GM12878 (cell line): ENCODE measurements at regions of chr3 and their contacts with region 1.

Region 1: GRCh38 chr3:23761440-23761896 is 44.3 kb upstream of the UBE2E1 start:
- DNase-seq: peak; percentile 56
- ATAC-seq: peak; percentile 68
- H3K4me3 ChIP-seq: peak overlapping the region; percentile 50; the same call in 1 of the 2 replicates
- H3K27ac ChIP-seq: peak overlapping the region; percentile 39
- H3K4me1 ChIP-seq: peaks cover 37% of the 10 kb centered on the region
- H3K27me3 ChIP-seq: no peaks in the 10 kb centered on the region
- CTCF ChIP-seq: peak; percentile 49 to 59 (median 54)
- EP300 ChIP-seq: no peak; a peak in 1 of 4 replicates
- POLR2A ChIP-seq: no peak
- RAD21 ChIP-seq: peak; percentile 72

Region 2: GRCh38 chr3:23202921-23203707 is 558.4 kb before region 1 on chr3 and contains the start of gene UBE2E2:
- CTCF ChIA-PET with region 1: interaction called, 3 read pairs
- POLR2A ChIA-PET with region 1: no interaction called
- RAD21 ChIA-PET with region 1: interaction called, 3 read pairs
- SMC1A ChIA-PET with region 1: interaction called, 12 read pairs
- in situ Hi-C with region 1: no loop called
- intact Hi-C with region 1: loop called (anchors 5 kb)
- DNase-seq: no peak
- ATAC-seq: peak; percentile 77
- H3K4me3 ChIP-seq: peak within 1 kb of the TSS; percentile 92
- H3K27ac ChIP-seq: peak within 1 kb of the TSS; percentile 59
- H3K4me1 ChIP-seq: no peaks in the 10 kb centered on the region
- H3K27me3 ChIP-seq: no peaks in the 10 kb centered on the region
- CTCF ChIP-seq: no peak
- EP300 ChIP-seq: peak in 1 of 2 experiments; percentile 22; a peak in 1 of 4 replicates
- POLR2A ChIP-seq: peak; percentile 75
- RAD21 ChIP-seq: peak; percentile 22; the same call in 1 of the 2 replicates
- polyA plus RNA-seq, gene UBE2E2: 8.7 to 15.0 TPM

Region 3: DNA sequence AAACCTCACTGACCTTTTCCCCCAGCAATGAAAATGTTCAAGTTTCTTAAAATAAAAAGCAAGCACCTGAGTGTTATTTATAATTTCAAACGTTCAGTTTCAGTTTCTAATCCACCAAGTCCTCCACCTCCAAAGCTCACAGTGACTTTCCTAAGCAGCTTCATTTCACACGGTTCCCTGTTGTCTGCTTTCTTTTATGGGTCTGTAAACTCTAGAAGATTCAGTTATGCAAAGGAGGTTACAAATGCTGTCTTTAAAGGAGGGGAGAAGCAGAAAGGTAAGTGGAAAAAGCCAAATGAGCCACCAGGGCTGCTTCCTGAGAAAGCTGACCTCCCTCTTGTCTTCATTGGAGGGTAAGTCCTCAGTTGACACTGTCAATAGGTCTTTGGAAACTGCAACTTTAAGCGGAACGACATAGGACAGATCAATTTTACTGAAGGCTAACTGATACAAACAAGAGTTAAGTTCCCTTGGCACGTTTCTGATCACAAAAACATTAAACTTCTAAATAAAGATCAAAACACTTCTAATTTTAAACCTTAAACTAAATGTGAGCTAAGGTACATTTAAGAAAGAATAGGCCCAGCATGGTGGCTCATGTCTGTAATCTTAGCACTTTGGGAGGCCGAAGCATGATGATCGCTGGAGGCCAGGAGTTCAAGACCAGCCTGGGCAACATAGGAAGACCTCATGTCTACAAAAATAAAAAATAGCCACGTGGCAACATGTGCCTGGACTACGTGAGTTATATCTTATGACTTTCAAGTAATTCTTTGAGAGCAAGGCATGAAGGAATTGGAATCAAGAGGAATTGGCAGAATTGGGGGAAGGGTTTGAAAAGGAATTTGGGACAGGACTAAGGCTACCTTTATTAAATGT is 107.6 kb before region 1 on chr3:
- CTCF ChIA-PET with region 1: interaction called, 5 read pairs
- POLR2A ChIA-PET with region 1: interaction called, 5 read pairs
- RAD21 ChIA-PET with region 1: interaction called, 23 read pairs
- SMC1A ChIA-PET with region 1: interaction called, 35 read pairs
- in situ Hi-C with region 1: no loop called
- intact Hi-C with region 1: loop called (anchors 2 kb)
- DNase-seq: peak; percentile 97
- ATAC-seq: peak; percentile 88
- H3K4me3 ChIP-seq: peak overlapping the region; percentile 26; the same call in 1 of the 2 replicates
- H3K27ac ChIP-seq: peak overlapping the region; percentile 88
- H3K4me1 ChIP-seq: peaks cover 48% of the 10 kb centered on the region
- H3K27me3 ChIP-seq: no peaks in the 10 kb centered on the region
- CTCF ChIP-seq: no peak
- EP300 ChIP-seq: peak; percentile 29 to 92; a peak in 3 of 4 replicates
- POLR2A ChIP-seq: no peak
- RAD21 ChIP-seq: peak; percentile 24; the same call in 1 of the 2 replicates

Region 4: DNA sequence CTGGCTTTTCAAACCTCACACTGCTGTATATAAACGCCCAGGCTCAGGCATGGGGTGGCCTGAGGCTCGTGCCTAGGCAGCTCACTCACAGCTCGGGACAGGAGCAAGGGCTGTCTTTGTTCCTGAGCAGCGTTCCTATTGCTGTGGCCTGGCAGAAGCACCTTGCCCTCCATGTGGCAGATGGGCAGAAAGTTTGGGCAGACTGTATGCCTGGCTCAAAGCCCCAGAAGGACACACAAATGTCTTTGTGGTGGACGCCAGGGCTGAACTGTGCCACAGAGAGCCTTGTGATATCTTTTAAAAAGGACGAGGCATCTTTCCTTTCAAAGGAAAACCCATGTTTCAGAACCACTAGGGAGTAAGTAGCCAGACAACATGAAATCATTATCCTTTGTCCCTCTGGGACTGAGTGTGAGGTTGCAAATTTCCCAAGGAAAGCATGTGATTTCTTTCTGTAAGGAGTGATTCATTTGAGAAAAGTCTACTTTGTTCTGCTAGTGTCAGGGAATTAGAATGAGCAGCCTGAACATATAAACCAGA is 15.0 kb after region 1 on chr3:
- CTCF ChIA-PET with region 1: interaction called, 6 read pairs
- POLR2A ChIA-PET with region 1: interaction called, 4 read pairs
- RAD21 ChIA-PET with region 1: no interaction called
- SMC1A ChIA-PET with region 1: interaction called, 10 read pairs
- in situ Hi-C with region 1: no loop called
- intact Hi-C with region 1: no loop called
- DNase-seq: no peak
- ATAC-seq: no peak
- H3K4me3 ChIP-seq: no peak overlapping the region
- H3K27ac ChIP-seq: no peak overlapping the region
- H3K4me1 ChIP-seq: peaks cover 10% of the 10 kb centered on the region; the same call in 1 of the 2 replicates
- H3K27me3 ChIP-seq: no peaks in the 10 kb centered on the region; a peak in 1 of 4 replicates
- CTCF ChIP-seq: no peak
- EP300 ChIP-seq: no peak
- POLR2A ChIP-seq: no peak
- RAD21 ChIP-seq: no peak

Region 5: GRCh38 chr3:23859016-23859743 is 97.7 kb after region 1 on chr3:
- CTCF ChIA-PET with region 1: interaction called, 4 read pairs
- POLR2A ChIA-PET with region 1: no interaction called
- RAD21 ChIA-PET with region 1: interaction called, 10 read pairs
- SMC1A ChIA-PET with region 1: interaction called, 12 read pairs
- in situ Hi-C with region 1: no loop called
- intact Hi-C with region 1: no loop called
- DNase-seq: no peak
- ATAC-seq: no peak
- H3K4me3 ChIP-seq: no peak overlapping the region
- H3K27ac ChIP-seq: no peak overlapping the region
- H3K4me1 ChIP-seq: peaks cover 30% of the 10 kb centered on the region
- H3K27me3 ChIP-seq: no peaks in the 10 kb centered on the region
- CTCF ChIP-seq: no peak
- EP300 ChIP-seq: no peak
- POLR2A ChIP-seq: no peak
- RAD21 ChIP-seq: no peak

Region 6: GRCh38 chr3:23900744-23901143 is 139.3 kb after region 1 on chr3:
- CTCF ChIA-PET with region 1: no interaction called
- POLR2A ChIA-PET with region 1: no interaction called
- RAD21 ChIA-PET with region 1: no interaction called
- SMC1A ChIA-PET with region 1: no interaction called
- in situ Hi-C with region 1: no loop called
- intact Hi-C with region 1: no loop called
- DNase-seq: no peak
- ATAC-seq: no peak
- H3K4me3 ChIP-seq: no peak overlapping the region
- H3K27ac ChIP-seq: no peak overlapping the region
- H3K4me1 ChIP-seq: no peaks in the 10 kb centered on the region
- H3K27me3 ChIP-seq: no peaks in the 10 kb centered on the region
- CTCF ChIP-seq: no peak
- EP300 ChIP-seq: no peak
- POLR2A ChIP-seq: no peak
- RAD21 ChIP-seq: no peak